PC-9 (cell line): ENCODE measurements at regions of chr20 and their contacts with region 1.

Region 1: GRCh38 chr20:34711813-34712430 is 7.8 kb downstream of the TP53INP2 start:
- DNase-seq: no peak
- H3K4me3 ChIP-seq: no peak overlapping the region
- H3K27ac ChIP-seq: no peak overlapping the region
- H3K4me1 ChIP-seq: peaks cover 28% of the 10 kb centered on the region
- H3K27me3 ChIP-seq: no peaks in the 10 kb centered on the region
- CTCF ChIP-seq: no peak

Region 2: GRCh38 chr20:34915749-34916455 is 204.0 kb after region 1 on chr20:
- CTCF ChIA-PET with region 1: no interaction called
- POLR2A ChIA-PET with region 1: no interaction called
- intact Hi-C with region 1: no loop called
- DNase-seq: no peak
- H3K4me3 ChIP-seq: no peak overlapping the region
- H3K27ac ChIP-seq: 0 out of 2 replicates have a peak overlapping the region, but pooled peaks have one; percentile 20
- H3K4me1 ChIP-seq: peaks cover 37% of the 10 kb centered on the region
- H3K27me3 ChIP-seq: no peaks in the 10 kb centered on the region
- CTCF ChIP-seq: no peak

Region 3: DNA sequence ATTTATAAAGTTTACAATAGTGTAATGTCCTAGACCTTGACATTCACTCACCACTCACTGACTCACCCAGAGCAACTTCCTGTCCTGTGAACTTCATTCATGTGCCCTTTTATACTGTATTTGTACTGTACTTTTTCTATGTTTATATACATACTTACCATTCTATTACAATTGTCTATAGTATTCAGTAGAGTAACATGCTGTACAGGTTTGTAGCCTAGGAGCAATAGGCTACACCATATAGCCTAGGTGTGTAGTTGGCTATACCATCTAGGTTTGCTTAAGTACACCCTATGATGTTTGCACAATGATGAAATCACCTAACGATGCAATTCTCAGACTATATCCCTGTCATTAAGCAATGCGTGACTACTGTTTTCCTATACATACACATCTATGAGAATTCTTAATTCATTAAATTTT is 417.7 kb after region 1 on chr20:
- CTCF ChIA-PET with region 1: no interaction called
- POLR2A ChIA-PET with region 1: interaction called, 11 read pairs
- intact Hi-C with region 1: no loop called
- DNase-seq: peak in 1 of 2 experiments; percentile 68
- H3K4me3 ChIP-seq: no peak overlapping the region
- H3K27ac ChIP-seq: peak overlapping the region; percentile 43
- H3K4me1 ChIP-seq: peaks cover 15% of the 10 kb centered on the region
- H3K27me3 ChIP-seq: no peaks in the 10 kb centered on the region
- CTCF ChIP-seq: no peak